ENCODE measurements at regions of chr5 and their contacts with region 1.

Region 1: DNA sequence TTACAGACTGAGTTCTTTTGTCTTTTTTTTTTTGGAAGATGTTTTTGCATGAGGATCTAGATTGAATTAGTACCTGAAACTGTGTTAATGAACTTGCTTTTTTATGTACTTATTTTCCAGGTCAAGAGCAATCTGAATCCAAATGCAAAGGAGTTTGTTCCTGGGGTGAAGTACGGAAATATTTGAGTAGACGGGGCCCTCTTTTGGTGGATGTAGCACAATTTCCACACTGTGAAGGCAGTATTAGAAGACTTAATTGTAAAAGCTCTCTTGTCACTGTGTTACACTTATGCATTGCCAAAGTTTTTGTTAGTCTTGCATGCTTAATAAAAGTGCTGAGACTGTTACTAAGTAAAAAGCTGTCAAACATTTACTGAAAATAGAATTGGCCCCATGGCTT is 14.5 kb downstream of the SLC23A1 start:
- DNase-seq: peak in 2 of 3 donors; percentile 40 to 51
- H3K4me3 ChIP-seq: no peak overlapping the region
- H3K27ac ChIP-seq: no peak overlapping the region
- H3K4me1 ChIP-seq: peaks cover 0 to 7% (median 0%) of the 10 kb centered on the region in 4 experiments
- H3K27me3 ChIP-seq: no peaks in the 10 kb centered on the region

Region 2: DNA sequence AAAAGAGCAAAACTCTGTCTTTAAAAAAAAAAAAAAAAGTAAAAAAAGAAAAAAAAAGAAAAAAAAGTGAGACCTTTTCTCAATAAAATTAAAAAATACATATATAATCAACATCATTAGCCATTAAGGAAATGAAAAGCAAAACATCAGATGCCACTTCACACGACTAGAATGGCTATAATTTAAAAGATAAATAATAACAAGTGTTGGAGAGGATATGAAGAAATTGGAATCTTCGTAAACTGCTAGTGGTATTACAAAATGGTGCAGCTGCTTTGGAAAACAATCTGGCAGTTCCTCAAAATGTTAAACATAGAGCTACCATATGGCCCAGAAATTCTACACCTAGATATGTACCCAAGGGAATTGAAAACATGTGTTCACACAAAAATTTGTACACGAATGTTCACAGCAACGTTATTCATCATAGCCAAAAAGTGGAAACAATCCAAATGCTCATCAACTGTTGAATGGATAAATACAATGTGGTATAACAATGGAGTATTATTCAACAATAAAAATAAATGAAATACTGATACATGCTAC is 125.1 kb before region 1 on chr5:
- CTCF ChIA-PET with region 1: no interaction called
- POLR2A ChIA-PET with region 1: no interaction called
- DNase-seq: no peak
- H3K4me3 ChIP-seq: no peak overlapping the region
- H3K27ac ChIP-seq: no peak overlapping the region
- H3K4me1 ChIP-seq: peaks cover 6 to 27% (median 25%) of the 10 kb centered on the region in 4 experiments
- H3K27me3 ChIP-seq: no peaks in the 10 kb centered on the region

Region 3: DNA sequence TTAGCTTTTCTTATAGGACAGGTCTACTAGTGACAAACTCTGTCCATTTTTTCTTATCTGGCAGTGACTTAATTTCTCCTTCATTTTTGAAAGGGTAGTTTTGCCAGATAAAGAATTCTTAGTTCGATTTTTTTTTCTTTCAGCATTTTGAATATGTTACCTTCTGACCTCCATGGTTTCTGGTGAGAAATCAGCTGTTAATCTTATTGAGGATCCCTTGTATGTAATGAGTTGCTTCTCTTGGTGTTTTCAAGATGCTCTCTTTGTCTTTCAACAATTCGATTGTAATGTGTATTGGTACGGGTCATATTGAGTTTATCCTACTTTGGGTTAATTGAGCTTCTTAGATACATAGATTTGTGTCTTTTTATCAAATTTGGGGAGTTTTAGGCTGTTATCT is 14.4 kb before region 1 on chr5:
- CTCF ChIA-PET with region 1: interaction called, 18 read pairs
- POLR2A ChIA-PET with region 1: no interaction called
- DNase-seq: no peak
- H3K4me3 ChIP-seq: no peak overlapping the region
- H3K27ac ChIP-seq: no peak overlapping the region
- H3K4me1 ChIP-seq: no peaks in the 10 kb centered on the region
- H3K27me3 ChIP-seq: no peaks in the 10 kb centered on the region

Region 4: DNA sequence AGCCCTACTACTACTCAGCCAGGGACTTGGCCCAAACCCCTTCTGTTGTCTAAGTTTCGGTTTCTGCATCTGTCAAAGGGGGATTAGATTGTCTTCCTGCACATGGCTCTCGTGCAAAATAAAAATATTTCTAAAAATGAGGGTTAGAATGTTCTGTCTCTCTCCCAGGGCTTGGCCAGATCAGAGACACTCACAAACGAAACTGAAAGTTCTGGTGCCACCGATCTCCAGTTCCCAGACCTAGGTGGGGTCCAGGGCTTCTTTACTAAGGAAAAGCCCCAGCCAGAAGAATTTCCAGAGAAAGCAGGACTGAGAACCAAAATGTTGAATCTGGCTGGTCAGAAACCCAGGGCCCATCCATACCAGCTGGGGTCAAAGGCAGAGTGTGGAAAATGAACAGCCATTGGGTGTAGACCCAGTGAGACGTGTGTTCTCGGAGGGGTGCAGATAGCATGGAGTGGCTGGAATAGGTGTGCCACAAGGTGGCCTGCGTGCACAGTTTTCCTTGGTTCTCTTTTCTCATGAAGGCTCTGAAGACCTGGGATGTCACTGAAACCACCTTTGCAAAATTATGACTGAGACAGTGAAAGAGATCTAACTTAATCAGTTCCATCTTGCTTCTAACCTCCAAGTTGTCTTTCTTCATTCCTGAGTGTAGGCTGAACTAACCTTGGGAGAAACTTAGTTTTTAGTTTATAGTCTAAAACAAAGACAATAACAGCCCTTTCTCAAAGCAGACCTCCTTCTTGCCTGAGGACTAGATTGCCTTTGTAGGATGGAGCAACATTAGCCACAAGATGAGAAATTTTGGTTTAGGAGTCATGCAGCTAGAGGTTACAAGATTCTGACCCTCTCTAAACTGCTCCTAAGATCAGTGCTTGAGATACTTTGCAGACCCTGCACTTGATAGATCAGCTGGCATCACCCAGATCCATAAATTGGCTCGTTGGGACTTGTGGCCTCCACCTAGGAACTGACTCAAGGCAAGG is 16.7 kb after region 1 on chr5:
- CTCF ChIA-PET with region 1: interaction called, 48 read pairs
- POLR2A ChIA-PET with region 1: interaction called, 5 read pairs
- DNase-seq: peak in 2 of 3 donors; percentile 51 to 59
- H3K4me3 ChIP-seq: peak overlapping the region; percentile 24 to 77 (median 67)
- H3K27ac ChIP-seq: peak overlapping the region; percentile 72 to 95
- H3K4me1 ChIP-seq: peaks cover 6 to 84% (median 80%) of the 10 kb centered on the region in 4 experiments
- H3K27me3 ChIP-seq: no peaks in the 10 kb centered on the region

Region 5: DNA sequence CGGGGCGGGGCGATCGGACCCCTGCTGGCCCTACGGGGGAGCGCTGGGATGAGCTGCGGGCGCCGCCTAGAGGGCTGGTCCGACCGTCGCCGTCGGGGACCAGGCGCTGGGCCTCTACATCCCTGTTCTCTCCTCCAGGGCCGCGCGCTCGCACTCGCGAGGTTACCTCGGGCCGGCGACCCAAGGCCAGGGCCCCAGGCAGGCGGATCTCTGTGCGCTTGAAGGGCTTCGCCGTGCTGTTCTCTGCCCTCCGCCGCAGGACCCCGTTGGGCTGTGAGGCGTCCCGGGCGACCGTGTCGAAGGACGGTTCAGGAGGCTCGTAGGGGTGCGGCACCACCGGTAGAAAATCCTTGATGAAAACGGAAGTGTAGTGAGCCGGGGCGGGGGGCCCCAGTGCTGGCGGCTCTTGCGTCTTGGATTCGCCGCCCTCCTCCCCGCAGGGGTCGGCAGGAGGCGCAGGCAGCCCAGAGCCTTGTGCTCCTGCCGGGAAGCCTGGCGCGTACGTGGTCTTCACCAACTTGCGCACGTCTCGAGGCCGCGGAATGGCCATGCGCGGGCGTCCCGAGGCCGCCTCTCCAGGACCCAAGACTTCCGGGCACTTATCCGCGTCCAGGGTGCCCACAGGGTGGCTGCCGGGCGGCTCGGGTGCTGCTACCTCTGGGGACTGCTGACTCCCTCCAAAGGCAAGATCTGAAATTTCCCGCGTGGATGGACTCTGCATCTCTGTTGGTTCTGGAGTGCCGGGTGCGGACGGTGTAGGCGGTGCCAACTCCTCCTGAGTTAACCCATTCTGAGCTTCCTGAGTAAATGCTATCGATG is 24.3 kb after region 1 on chr5:
- CTCF ChIA-PET with region 1: interaction called, 48 read pairs
- POLR2A ChIA-PET with region 1: interaction called, 5 read pairs
- DNase-seq: peak; percentile 91 to 93 (median 92)
- H3K4me3 ChIP-seq: peak overlapping the region; percentile 47 to 81 (median 72)
- H3K27ac ChIP-seq: peak overlapping the region in 1 of 2 experiments; percentile 95
- H3K4me1 ChIP-seq: peaks cover 0 to 73% (median 68%) of the 10 kb centered on the region in 4 experiments
- H3K27me3 ChIP-seq: no peaks in the 10 kb centered on the region